ENCODE measurements at regions of chr22 and their contacts with region 1.

Region 1: DNA sequence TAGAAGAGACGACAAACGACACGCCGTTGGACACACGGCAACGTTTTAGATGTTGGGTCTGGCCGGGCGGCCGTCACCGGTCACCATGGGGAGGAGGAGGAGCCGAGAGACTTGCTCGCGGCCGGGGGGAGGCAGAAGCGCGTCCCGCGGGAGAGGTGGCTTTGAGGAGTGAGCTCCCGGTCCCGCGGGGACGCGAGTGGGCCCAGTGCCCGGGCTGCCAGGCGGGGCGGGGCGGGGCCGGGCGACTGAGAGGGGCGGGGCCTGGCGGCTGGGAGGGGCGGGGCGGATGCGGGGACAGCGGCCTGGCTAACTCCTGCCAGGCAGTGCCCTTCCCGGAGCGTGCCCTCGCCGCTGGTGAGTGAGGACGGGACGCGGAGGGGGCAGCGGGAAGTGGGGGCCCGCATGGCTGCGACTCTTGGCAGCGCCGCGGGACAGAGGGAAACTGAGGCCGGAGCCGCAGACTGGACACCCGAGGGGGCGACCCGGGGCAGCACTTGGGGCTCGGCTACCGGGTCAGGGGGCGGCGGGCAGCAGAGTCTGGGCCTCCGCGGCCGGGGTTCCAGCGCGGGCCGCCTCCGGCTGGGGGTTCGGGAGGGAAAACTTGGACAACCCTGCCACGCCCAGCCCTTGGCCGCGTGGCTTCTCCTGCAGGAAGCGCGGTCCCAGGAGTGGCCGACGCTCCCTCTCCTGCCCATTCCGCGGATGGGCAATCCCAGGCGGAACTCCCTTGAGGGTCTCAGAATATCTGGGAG is at the start of gene TSPO:
- DNase-seq: peak; percentile 39
- ATAC-seq: peak; percentile 64
- H3K4me3 ChIP-seq: peak within 1 kb of the TSS; percentile 70
- H3K27ac ChIP-seq: peak within 1 kb of the TSS; percentile 73
- H3K4me1 ChIP-seq: peaks cover 13% of the 10 kb centered on the region; the same call in 1 of the 2 replicates
- H3K27me3 ChIP-seq: no peaks in the 10 kb centered on the region
- CTCF ChIP-seq: no peak
- total RNA-seq, gene TSPO: 283 and 349 TPM in 2 replicates

Region 2: GRCh38 chr22:42493393-42493792 is 658.0 kb before region 1 on chr22:
- CTCF ChIA-PET with region 1: no interaction called
- POLR2A ChIA-PET with region 1: interaction called, 14 read pairs
- intact Hi-C with region 1: no loop called
- DNase-seq: no peak
- ATAC-seq: no peak
- H3K4me3 ChIP-seq: no peak overlapping the region
- H3K27ac ChIP-seq: no peak overlapping the region
- H3K4me1 ChIP-seq: 0 out of 2 replicates have a peak, but pooled peaks cover 4% of the 10 kb centered on the region
- H3K27me3 ChIP-seq: no peaks in the 10 kb centered on the region
- CTCF ChIP-seq: no peak

Region 3: DNA sequence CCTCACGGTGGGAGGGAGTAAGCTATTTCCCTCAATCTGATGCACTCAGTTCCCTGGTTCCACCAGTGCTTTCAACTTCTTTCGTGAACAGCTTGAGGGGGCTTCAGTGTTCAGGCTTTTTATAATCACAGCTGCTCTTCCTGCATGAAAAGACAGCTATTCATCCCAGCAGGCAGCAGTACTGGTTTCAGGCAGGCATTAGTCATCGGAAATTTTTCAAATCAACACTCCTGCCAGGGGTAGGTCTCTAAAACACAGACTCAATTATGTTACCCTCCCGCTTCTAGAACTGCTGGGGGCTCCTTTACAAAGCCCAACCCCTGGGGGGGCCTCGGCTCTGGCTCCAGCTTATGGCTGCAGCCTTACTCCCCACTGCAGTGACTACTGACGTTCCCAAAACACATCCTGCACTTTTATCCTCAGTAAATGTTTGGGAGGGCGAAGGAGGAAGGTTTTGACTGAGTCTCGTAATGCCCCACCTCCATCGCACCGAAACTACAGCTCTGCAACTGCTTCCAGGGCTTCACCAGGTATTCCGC is 542.5 kb before region 1 on chr22:
- CTCF ChIA-PET with region 1: no interaction called
- POLR2A ChIA-PET with region 1: interaction called, 20 read pairs
- intact Hi-C with region 1: no loop called
- DNase-seq: peak; percentile 14
- ATAC-seq: peak; percentile 69
- H3K4me3 ChIP-seq: no peak overlapping the region
- H3K27ac ChIP-seq: no peak overlapping the region
- H3K4me1 ChIP-seq: peaks cover 17% of the 10 kb centered on the region
- H3K27me3 ChIP-seq: no peaks in the 10 kb centered on the region
- CTCF ChIP-seq: no peak